ENCODE measurements at regions of chr19 and their contacts with region 1.

Region 1: GRCh38 chr19:50922317-50922853 is 11.2 kb upstream of the KLK4 start:
- DNase-seq: peak; percentile 85
- H3K4me3 ChIP-seq: peak overlapping the region in 1 of 2 experiments; percentile 35; a peak in 1 of 4 replicates
- H3K27ac ChIP-seq: no peak overlapping the region
- H3K4me1 ChIP-seq: no peaks in the 10 kb centered on the region; a peak in 1 of 4 replicates
- H3K27me3 ChIP-seq: peaks cover 63% of the 10 kb centered on the region; the same call in 1 of the 2 replicates
- CTCF ChIP-seq: peak; percentile 76
- EP300 ChIP-seq: no peak
- RAD21 ChIP-seq: peak; percentile 83

Region 2: GRCh38 chr19:50724522-50725217 is 197.7 kb before region 1 on chr19:
- CTCF ChIA-PET with region 1: interaction called, 11 read pairs
- POLR2A ChIA-PET with region 1: no interaction called
- DNase-seq: peak; percentile 100
- H3K4me3 ChIP-seq: peak overlapping the region; percentile 62 to 83
- H3K27ac ChIP-seq: peak overlapping the region; percentile 46 to 86; a peak in 3 of 4 replicates
- H3K4me1 ChIP-seq: peaks cover 0 to 21% of the 10 kb centered on the region in 2 experiments; a peak in 2 of 4 replicates
- H3K27me3 ChIP-seq: no peaks in the 10 kb centered on the region
- CTCF ChIP-seq: peak; percentile 83
- EP300 ChIP-seq: no peak
- RAD21 ChIP-seq: peak; percentile 55

Region 3: GRCh38 chr19:50909240-50910070 is 12.9 kb before region 1 on chr19:
- CTCF ChIA-PET with region 1: interaction called, 25 read pairs
- POLR2A ChIA-PET with region 1: no interaction called
- DNase-seq: peak; percentile 83
- H3K4me3 ChIP-seq: no peak overlapping the region; a peak in 1 of 4 replicates
- H3K27ac ChIP-seq: no peak overlapping the region
- H3K4me1 ChIP-seq: no peaks in the 10 kb centered on the region
- H3K27me3 ChIP-seq: peaks cover 75% of the 10 kb centered on the region
- CTCF ChIP-seq: no peak
- EP300 ChIP-seq: no peak
- RAD21 ChIP-seq: no peak

Region 4: GRCh38 chr19:50933640-50934039 is 11.3 kb after region 1 on chr19:
- CTCF ChIA-PET with region 1: interaction called, 24 read pairs
- POLR2A ChIA-PET with region 1: no interaction called
- DNase-seq: no peak
- H3K4me3 ChIP-seq: no peak overlapping the region
- H3K27ac ChIP-seq: no peak overlapping the region
- H3K4me1 ChIP-seq: no peaks in the 10 kb centered on the region
- H3K27me3 ChIP-seq: peaks cover 37% of the 10 kb centered on the region; the same call in 1 of the 2 replicates
- CTCF ChIP-seq: no peak
- EP300 ChIP-seq: no peak
- RAD21 ChIP-seq: no peak

Region 5: GRCh38 chr19:50939596-50939995 is 17.2 kb after region 1 on chr19:
- CTCF ChIA-PET with region 1: interaction called, 24 read pairs
- POLR2A ChIA-PET with region 1: no interaction called
- DNase-seq: no peak
- H3K4me3 ChIP-seq: no peak overlapping the region
- H3K27ac ChIP-seq: no peak overlapping the region
- H3K4me1 ChIP-seq: no peaks in the 10 kb centered on the region
- H3K27me3 ChIP-seq: peaks cover 22% of the 10 kb centered on the region; the same call in 1 of the 2 replicates
- CTCF ChIP-seq: no peak
- EP300 ChIP-seq: no peak
- RAD21 ChIP-seq: no peak

Region 6: GRCh38 chr19:50944795-50945194 is 22.4 kb after region 1 on chr19:
- CTCF ChIA-PET with region 1: interaction called, 16 read pairs
- POLR2A ChIA-PET with region 1: no interaction called
- DNase-seq: no peak
- H3K4me3 ChIP-seq: no peak overlapping the region
- H3K27ac ChIP-seq: no peak overlapping the region
- H3K4me1 ChIP-seq: no peaks in the 10 kb centered on the region
- H3K27me3 ChIP-seq: peaks cover 18% of the 10 kb centered on the region; the same call in 1 of the 2 replicates
- CTCF ChIP-seq: no peak
- EP300 ChIP-seq: no peak
- RAD21 ChIP-seq: no peak

Region 7: GRCh38 chr19:51259348-51260245 is 337.2 kb after region 1 on chr19:
- CTCF ChIA-PET with region 1: no interaction called
- POLR2A ChIA-PET with region 1: no interaction called
- DNase-seq: peak; percentile 48
- H3K4me3 ChIP-seq: peak overlapping the region in 1 of 2 experiments; percentile 27; a peak in 1 of 4 replicates
- H3K27ac ChIP-seq: no peak overlapping the region
- H3K4me1 ChIP-seq: no peaks in the 10 kb centered on the region
- H3K27me3 ChIP-seq: peaks cover 12% of the 10 kb centered on the region; the same call in 1 of the 2 replicates
- CTCF ChIP-seq: peak; percentile 70
- EP300 ChIP-seq: no peak
- RAD21 ChIP-seq: peak; percentile 61

Measured in SK-N-SH (cell line).